HAP-1 (cell line): ENCODE measurements at regions of chr9 and their contacts with region 1.

Region 1: GRCh38 chr9:100598641-100599145 is 20.8 kb downstream of the CAVIN4 start:
- DNase-seq: peak; percentile 83 to 92
- H3K4me3 ChIP-seq: peak overlapping the region; percentile 30
- H3K4me1 ChIP-seq: peaks cover 12% of the 10 kb centered on the region
- H3K27me3 ChIP-seq: no peaks in the 10 kb centered on the region

Region 2: GRCh38 chr9:99184475-99185347 is 1414.0 kb before region 1 on chr9:
- in situ Hi-C with region 1: loop called (anchors 25 kb)
- DNase-seq: peak; percentile 67 to 89
- H3K4me3 ChIP-seq: no peak overlapping the region
- H3K4me1 ChIP-seq: no peaks in the 10 kb centered on the region
- H3K27me3 ChIP-seq: peaks cover 13% of the 10 kb centered on the region

Region 3: GRCh38 chr9:100322954-100323536 is 275.6 kb before region 1 on chr9:
- in situ Hi-C with region 1: loop called (anchors 25 kb)
- DNase-seq: peak; percentile 34 to 54
- H3K4me3 ChIP-seq: no peak overlapping the region
- H3K4me1 ChIP-seq: no peaks in the 10 kb centered on the region
- H3K27me3 ChIP-seq: no peaks in the 10 kb centered on the region

Region 4: DNA sequence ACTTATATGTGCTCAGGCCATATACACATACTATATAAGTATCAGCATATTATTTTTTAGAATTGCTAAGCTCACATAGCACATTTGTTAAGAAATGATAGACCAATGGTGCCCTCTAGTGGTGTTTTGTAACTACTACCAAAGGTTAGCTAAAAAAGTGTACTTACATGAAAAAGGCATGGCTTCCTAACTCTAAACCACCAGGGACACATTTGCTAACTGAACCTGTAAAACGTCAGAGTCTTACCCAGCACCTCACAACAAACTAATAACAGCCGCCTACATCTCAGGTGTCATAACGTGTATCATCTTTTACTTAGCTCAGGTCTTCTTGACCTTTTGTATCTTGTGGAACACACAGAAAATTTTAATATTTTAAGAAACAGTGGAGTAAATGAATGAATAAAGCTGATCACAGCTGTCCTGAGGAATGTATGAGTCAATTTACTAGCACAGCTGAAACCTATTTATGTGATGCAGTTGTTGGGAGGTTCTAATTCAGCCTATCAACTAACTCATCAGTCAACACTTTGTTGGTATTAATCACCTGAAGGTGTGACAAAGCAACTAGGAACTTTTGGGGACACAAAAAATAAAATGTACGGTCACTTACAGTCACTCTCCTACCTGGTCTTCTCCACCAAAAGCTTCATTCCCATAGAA is 713.2 kb after region 1 on chr9:
- in situ Hi-C with region 1: loop called (anchors 10 kb)
- DNase-seq: peak; percentile 38 to 79
- H3K4me3 ChIP-seq: no peak overlapping the region
- H3K4me1 ChIP-seq: no peaks in the 10 kb centered on the region
- H3K27me3 ChIP-seq: peaks cover 2% of the 10 kb centered on the region; the same call in 1 of the 2 replicates